HEK293 (cell line): ENCODE measurements at regions of chr16 and their contacts with region 1.

Region 1: GRCh38 chr16:70653809-70654771 is 7.7 kb downstream of the IL34 start:
- H3K4me3 ChIP-seq: no peak overlapping the region; the same call in 1 of the 2 replicates
- H3K27ac ChIP-seq: no peak overlapping the region
- H3K4me1 ChIP-seq: no peaks in the 10 kb centered on the region
- CTCF ChIP-seq: peak; percentile 93

Region 2: GRCh38 chr16:70598937-70599503 is 55.1 kb before region 1 on chr16:
- CTCF ChIA-PET with region 1: interaction called, 12 read pairs
- POLR2A ChIA-PET with region 1: no interaction called
- H3K4me3 ChIP-seq: no peak overlapping the region
- H3K27ac ChIP-seq: no peak overlapping the region
- H3K4me1 ChIP-seq: no peaks in the 10 kb centered on the region
- CTCF ChIP-seq: no peak

Region 3: GRCh38 chr16:70664325-70665112 is 10.4 kb after region 1 on chr16:
- CTCF ChIA-PET with region 1: interaction called, 13 read pairs
- POLR2A ChIA-PET with region 1: interaction called, 3 read pairs
- H3K4me3 ChIP-seq: no peak overlapping the region
- H3K27ac ChIP-seq: no peak overlapping the region
- H3K4me1 ChIP-seq: no peaks in the 10 kb centered on the region
- CTCF ChIP-seq: no peak

Region 4: DNA sequence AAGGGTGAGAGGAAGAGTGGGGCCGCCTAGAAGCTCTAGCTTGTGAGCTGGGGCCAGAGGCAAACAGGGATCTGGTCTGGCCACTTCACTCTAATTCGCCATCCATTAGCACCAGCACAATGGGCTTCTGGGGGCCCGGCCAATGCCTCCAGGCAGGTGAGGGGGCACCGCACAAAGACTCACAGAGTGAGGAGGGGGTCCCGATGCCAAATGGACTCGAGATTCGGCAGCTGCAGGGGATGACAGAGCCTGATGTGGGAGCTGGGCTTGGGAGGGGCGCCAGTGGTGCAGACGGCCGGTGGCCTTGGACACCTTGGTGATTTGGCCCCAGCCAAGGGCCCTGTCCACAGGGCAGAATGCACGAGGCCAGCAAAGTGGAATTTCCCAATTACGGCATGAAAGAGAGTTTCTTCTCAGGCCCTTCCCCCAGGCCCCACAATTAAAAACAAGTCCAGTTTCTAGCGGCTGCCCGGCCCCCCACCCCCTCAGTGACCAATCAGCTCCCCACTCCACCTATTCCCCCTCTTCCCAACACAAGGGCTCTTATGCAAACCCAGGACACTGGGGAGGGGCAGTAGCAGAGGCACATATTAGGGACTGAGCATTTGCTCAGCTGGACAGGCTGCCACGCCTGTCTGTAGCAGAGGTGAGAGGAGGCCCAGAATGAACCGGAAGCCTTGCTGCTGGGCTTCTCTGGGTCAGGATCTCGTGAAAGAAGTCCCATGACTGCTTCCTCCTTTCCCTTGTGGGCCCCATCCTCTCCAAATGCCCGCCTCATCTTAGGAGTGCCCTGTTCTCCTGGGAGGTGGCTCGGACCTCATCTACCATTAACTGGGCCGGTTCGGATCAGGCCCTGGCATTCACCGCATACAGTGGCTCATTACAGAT is 71.2 kb after region 1 on chr16:
- CTCF ChIA-PET with region 1: no interaction called
- POLR2A ChIA-PET with region 1: no interaction called
- H3K4me3 ChIP-seq: no peak overlapping the region
- H3K27ac ChIP-seq: no peak overlapping the region
- H3K4me1 ChIP-seq: no peaks in the 10 kb centered on the region
- CTCF ChIP-seq: no peak